ENCODE measurements at regions of chr16 and their contacts with region 1.

Region 1: GRCh38 chr16:75622761-75623605 is at the start of gene ADAT1:
- DNase-seq: peak; percentile 96 to 99 (median 98)
- H3K4me3 ChIP-seq: peak within 1 kb of the TSS; percentile 75
- H3K4me3 Mint-ChIP-seq: peak within 1 kb of the TSS; percentile 95 to 99 (median 96)
- H3K27ac ChIP-seq: peak within 1 kb of the TSS; percentile 96
- H3K27ac Mint-ChIP-seq: peak within 1 kb of the TSS; percentile 95 to 100 (median 98)
- H3K4me1 ChIP-seq: peaks cover 60% of the 10 kb centered on the region
- H3K4me1 Mint-ChIP-seq: peaks cover 64 to 86% (median 78%) of the 10 kb centered on the region in 3 donors
- H3K27me3 ChIP-seq: no peaks in the 10 kb centered on the region
- H3K27me3 Mint-ChIP-seq: no peaks in the 10 kb centered on the region
- total RNA-seq, gene ADAT1: 57.9 to 59.8 TPM

Region 2: GRCh38 chr16:75432828-75433731 is 189.9 kb before region 1 on chr16 and contains the start of gene CFDP1:
- CTCF ChIA-PET with region 1: interaction called, 6 read pairs
- POLR2A ChIA-PET with region 1: interaction called, 15 read pairs
- DNase-seq: peak; percentile 94 to 98 (median 96)
- H3K4me3 ChIP-seq: peak within 1 kb of the TSS; percentile 93
- H3K4me3 Mint-ChIP-seq: peak within 1 kb of the TSS; percentile 86 to 95 (median 93)
- H3K27ac ChIP-seq: peak within 1 kb of the TSS; percentile 98
- H3K27ac Mint-ChIP-seq: peak within 1 kb of the TSS; percentile 94 to 99 (median 97)
- H3K4me1 ChIP-seq: peaks cover 12% of the 10 kb centered on the region
- H3K4me1 Mint-ChIP-seq: peaks cover 25 to 46% (median 39%) of the 10 kb centered on the region in 3 donors
- H3K27me3 ChIP-seq: no peaks in the 10 kb centered on the region
- H3K27me3 Mint-ChIP-seq: peaks cover 0 to 2% of the 10 kb centered on the region in 2 donors
- total RNA-seq, gene CFDP1: 34.2 to 39.1 TPM

Region 3: DNA sequence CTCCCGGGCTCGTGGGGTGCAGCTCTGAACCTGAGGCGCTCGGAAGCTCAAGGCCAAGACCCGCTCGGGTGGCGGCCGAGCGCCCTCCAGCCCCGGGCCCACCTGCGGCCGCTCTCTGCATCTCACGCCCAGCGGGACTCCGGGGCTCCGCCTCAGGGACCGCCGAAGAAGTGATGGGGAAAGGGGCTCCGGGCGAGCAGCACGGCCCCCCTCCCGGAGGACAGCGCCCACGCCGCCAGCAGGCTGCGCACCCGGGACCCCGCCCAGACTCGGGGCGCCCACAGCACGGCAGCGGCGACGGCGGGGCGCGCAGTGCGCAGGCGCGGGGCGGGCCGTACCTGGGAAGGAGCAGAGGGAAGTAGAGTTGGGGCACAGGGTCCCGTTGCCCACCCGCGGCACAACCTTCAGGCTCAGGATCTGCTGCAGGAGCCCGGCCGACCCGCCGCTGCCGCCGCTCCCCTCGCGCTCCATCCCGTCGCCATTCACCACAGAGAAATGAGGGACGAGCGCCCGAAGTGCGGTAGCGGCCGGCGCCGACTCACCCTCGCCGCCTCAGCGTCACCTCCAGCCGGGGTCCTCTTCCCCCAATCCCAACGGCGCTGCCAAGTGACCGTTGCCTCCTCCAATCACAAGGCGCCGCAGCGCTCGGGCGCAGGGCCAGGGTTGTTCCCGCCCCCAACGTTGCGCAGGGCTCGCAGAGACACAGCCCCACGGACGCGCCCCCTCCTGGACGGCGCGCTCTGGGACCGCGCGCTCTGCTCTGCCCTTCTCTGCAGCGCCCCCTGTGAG is 158.7 kb before region 1 on chr16 and contains the start of gene TMEM170A:
- CTCF ChIA-PET with region 1: interaction called, 11 read pairs
- POLR2A ChIA-PET with region 1: interaction called, 11 read pairs
- DNase-seq: peak; percentile 98 to 99 (median 99)
- H3K4me3 ChIP-seq: peak within 1 kb of the TSS; percentile 91
- H3K4me3 Mint-ChIP-seq: peak within 1 kb of the TSS; percentile 88 to 98 (median 92)
- H3K27ac ChIP-seq: peak within 1 kb of the TSS; percentile 96
- H3K27ac Mint-ChIP-seq: peak within 1 kb of the TSS; percentile 93 to 99 (median 94)
- H3K4me1 ChIP-seq: peaks cover 30% of the 10 kb centered on the region
- H3K4me1 Mint-ChIP-seq: peaks cover 44 to 49% (median 48%) of the 10 kb centered on the region in 3 donors
- H3K27me3 ChIP-seq: no peaks in the 10 kb centered on the region
- H3K27me3 Mint-ChIP-seq: peaks cover 0 to 4% of the 10 kb centered on the region in 2 donors
- total RNA-seq, gene TMEM170A: 40.9 to 41.8 TPM

Region 4: DNA sequence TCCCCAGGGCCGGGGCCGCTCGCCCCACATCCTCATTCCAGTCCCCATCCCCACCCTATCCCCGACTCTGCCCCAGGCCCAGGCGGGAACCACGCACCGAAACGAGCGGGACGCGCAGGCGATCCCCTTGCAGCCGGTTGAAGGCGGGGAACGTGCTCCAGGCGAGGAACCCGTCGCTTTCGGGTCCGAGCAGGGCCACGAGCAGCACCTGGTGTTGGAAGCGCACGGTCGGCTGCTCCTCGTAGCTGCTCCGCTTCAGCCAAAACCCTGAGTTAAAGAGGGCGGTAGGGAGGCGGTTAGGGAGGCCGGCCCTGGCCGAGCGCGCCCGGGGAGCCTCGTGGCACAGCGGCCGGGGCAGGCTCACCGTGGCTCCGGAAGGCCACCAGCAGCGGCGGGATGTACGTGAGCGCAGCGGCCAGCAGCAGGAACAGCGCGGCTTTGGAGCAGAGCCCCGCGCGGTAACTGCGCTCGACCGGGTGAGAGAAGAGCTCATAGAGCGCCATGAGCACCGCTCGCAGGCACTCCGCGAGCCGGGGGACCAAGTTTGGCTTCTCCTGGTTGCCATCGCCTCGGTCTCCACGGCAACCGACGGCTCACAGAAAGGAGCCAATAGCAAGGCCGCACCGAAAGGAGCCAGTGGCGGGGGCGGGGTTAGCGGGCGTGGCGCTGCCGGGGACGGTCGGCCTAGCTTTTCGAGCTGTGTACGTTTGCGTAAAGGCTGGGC is 67.1 kb before region 1 on chr16 and contains the start of gene TMEM231:
- CTCF ChIA-PET with region 1: interaction called, 12 read pairs
- POLR2A ChIA-PET with region 1: interaction called, 9 read pairs
- DNase-seq: peak; percentile 94 to 98 (median 96)
- H3K4me3 ChIP-seq: peak within 1 kb of the TSS; percentile 89
- H3K4me3 Mint-ChIP-seq: peak within 1 kb of the TSS; percentile 77 to 95 (median 87)
- H3K27ac ChIP-seq: peak within 1 kb of the TSS; percentile 58
- H3K27ac Mint-ChIP-seq: peak within 1 kb of the TSS; percentile 89 to 98 (median 94)
- H3K4me1 ChIP-seq: peaks cover 13% of the 10 kb centered on the region
- H3K4me1 Mint-ChIP-seq: peaks cover 7 to 17% (median 10%) of the 10 kb centered on the region in 3 donors
- H3K27me3 ChIP-seq: no peaks in the 10 kb centered on the region
- H3K27me3 Mint-ChIP-seq: no peaks in the 10 kb centered on the region
- total RNA-seq, gene TMEM231: 5.3 to 5.4 TPM

Region 5: GRCh38 chr16:75566040-75566810 is 56.8 kb before region 1 on chr16 and contains the start of gene GABARAPL2:
- CTCF ChIA-PET with region 1: interaction called, 9 read pairs
- POLR2A ChIA-PET with region 1: interaction called, 35 read pairs
- DNase-seq: peak; percentile 89 to 94 (median 91)
- H3K4me3 ChIP-seq: peak within 1 kb of the TSS; percentile 85
- H3K4me3 Mint-ChIP-seq: peak within 1 kb of the TSS; percentile 92 to 100 (median 96)
- H3K27ac ChIP-seq: peak within 1 kb of the TSS; percentile 83
- H3K27ac Mint-ChIP-seq: peak within 1 kb of the TSS; percentile 89 to 100 (median 98)
- H3K4me1 ChIP-seq: peaks cover 36% of the 10 kb centered on the region
- H3K4me1 Mint-ChIP-seq: peaks cover 43 to 58% (median 54%) of the 10 kb centered on the region in 3 donors
- H3K27me3 ChIP-seq: no peaks in the 10 kb centered on the region
- H3K27me3 Mint-ChIP-seq: peaks cover 7 to 14% of the 10 kb centered on the region in 2 donors
- total RNA-seq, gene GABARAPL2: 61.7 to 66.2 TPM

Measured in CD8-positive, alpha-beta memory T cell (primary cell).